ENCODE measurements at regions of chr7 and their contacts with region 1.

Region 1: DNA sequence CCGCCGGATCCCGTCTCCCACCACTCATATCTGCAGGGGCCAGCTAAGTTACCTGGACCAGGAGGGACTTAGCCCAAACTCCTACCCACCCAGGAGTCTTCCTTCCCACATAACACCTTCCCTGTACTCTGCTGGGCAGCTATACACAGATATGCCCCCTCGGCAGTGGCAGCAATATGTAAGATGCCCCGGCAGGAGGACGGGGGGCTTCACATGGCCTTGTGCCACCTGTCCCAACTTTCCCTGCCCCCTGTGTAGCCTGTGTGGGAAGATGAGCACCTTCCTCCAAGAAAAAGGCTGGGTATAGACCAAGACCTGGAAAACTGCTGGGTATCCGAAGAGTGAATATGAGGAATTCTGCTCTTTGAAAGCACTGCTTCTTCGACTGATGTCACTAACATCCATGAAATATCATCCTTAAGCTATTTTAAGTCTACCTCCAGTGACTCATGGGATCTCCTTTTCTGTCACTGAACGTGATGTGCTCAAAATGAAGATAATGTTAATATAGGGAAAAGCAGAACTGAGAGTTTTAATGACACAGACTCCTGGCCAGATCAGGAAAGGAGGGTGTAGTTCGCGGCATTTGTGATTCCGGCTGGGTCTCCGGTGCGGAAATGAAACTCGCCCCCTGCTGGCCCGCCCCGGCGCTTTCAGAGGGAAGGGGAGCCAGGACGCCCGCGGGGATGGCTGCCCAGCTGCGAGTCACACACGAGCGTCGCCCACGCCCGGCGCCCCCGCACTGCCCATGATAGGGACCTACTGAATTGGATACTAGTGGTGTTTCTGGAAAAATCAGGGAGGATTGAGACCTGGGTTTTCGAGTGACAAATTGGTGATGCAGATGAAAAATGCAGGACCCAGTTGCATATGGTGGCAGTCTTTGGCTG is 256.9 kb upstream of the NFE2L3 start:
- DNase-seq: peak; percentile 20
- ATAC-seq: peak; percentile 80
- H3K4me3 ChIP-seq: peak overlapping the region; percentile 6 to 44
- H3K27ac ChIP-seq: no peak overlapping the region
- H3K4me1 ChIP-seq: peaks cover 4% of the 10 kb centered on the region; the same call in 1 of the 2 replicates
- H3K27me3 ChIP-seq: peaks cover 5% of the 10 kb centered on the region; the same call in 1 of the 2 replicates
- CTCF ChIP-seq: peak; percentile 92

Region 2: DNA sequence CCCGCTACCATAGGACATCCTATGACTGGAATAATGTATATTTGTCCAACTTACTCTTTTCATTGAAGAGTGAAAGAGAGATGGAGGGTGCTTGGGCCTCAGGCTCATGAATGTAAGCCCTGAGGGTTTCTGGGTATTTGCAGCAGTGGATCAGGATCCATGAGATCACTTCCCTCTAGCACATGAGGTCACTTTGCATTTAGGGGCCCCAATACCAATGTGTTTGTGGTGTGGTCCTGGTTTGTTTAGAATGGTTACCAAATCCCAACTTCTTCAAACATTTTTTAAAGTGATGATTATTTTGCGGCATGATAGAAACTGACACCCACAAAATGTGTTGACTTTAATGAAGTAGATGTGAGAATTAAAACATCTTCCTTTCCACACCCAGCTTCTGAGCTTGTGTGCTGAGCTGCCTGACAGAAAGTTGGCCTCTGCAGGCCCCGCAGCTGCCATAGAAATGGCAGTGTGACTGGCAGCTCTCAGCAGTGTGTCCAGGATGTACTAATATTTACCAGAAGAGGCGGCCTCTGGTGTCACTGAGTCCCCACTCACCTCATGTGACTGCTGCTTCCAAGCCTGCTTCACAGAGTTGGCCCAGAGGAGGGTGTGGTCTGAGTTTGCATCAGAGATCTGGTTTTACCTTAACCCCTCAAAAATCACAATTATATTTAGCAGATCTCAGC is 219.2 kb before region 1 on chr7:
- CTCF ChIA-PET with region 1: no interaction called
- POLR2A ChIA-PET with region 1: no interaction called
- in situ Hi-C with region 1: no loop called
- intact Hi-C with region 1: no loop called
- DNase-seq: no peak
- ATAC-seq: no peak
- H3K4me3 ChIP-seq: no peak overlapping the region
- H3K27ac ChIP-seq: no peak overlapping the region
- H3K4me1 ChIP-seq: no peaks in the 10 kb centered on the region
- H3K27me3 ChIP-seq: 0 out of 2 replicates have a peak, but pooled peaks cover 3% of the 10 kb centered on the region
- CTCF ChIP-seq: no peak

Region 3: DNA sequence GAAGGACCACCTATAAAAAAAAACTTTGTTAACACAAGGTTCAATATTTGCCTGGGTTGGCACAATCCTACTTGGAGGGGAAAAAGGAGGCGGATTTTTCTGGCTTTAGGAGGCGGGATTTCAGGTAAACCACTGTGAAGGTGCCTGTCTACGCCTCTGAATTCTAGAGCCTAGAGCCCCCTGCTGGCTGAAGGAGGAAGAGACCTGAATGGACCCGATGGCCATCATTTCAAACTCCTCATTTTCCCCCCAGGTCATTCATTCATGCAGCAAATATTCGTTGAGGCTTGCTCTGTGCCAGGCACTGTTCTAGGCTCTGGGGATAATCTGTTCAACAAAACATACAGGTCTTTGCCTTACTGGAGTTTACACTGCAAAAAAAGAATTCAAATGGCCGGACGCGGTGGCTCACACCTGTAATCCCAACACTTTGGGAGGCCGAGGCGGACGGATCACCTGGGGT is 166.6 kb after region 1 on chr7:
- CTCF ChIA-PET with region 1: interaction called, 3 read pairs
- POLR2A ChIA-PET with region 1: no interaction called
- in situ Hi-C with region 1: no loop called
- intact Hi-C with region 1: loop called (anchors 1 kb)
- DNase-seq: peak; percentile 46
- ATAC-seq: peak; percentile 94
- H3K4me3 ChIP-seq: no peak overlapping the region
- H3K27ac ChIP-seq: no peak overlapping the region
- H3K4me1 ChIP-seq: peaks cover 3% of the 10 kb centered on the region; the same call in 1 of the 2 replicates
- H3K27me3 ChIP-seq: peaks cover 18% of the 10 kb centered on the region
- CTCF ChIP-seq: peak; percentile 97

Region 4: DNA sequence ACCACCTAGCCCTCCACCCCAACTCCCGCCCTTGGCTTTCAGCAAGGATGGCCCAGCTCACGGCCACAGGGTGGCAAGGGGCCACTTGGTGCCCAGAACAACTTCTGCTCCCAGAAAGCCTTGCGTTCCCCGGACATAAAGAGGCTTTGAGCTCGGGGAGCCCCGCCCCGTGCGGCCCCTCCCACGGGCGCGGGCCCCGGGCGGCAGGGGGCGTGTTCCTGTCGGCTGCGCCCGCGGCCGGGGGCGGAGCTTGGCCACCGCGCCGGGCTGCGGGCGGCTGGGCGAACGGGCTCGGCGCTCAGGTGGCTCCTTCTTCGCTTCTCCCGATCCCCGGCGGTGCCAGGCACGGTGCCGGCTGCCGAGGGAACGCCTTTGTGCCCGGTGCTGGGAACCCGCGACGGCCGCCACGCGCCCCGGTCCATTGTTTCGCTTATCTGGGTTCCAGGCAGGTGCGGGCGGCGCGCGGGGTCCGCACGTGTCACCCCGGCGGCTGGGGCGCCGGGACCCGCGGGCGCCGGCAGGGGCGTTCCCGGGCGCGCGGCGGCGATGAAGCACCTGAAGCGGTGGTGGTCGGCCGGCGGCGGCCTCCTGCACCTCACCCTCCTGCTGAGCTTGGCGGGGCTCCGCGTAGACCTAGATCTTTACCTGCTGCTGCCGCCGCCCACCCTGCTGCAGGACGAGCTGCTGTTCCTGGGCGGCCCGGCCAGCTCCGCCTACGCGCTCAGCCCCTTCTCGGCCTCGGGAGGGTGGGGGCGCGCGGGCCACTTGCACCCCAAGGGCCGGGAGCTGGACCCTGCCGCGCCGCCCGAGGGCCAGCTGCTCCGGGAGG is 257.0 kb after region 1 on chr7 and contains the start of gene NFE2L3:
- CTCF ChIA-PET with region 1: no interaction called
- POLR2A ChIA-PET with region 1: no interaction called
- in situ Hi-C with region 1: no loop called
- intact Hi-C with region 1: loop called (anchors 10 kb)
- DNase-seq: no peak
- ATAC-seq: peak; percentile 75
- H3K4me3 ChIP-seq: peak within 1 kb of the TSS; percentile 53 to 88
- H3K27ac ChIP-seq: peak within 1 kb of the TSS; percentile 95
- H3K4me1 ChIP-seq: peaks cover 19% of the 10 kb centered on the region
- H3K27me3 ChIP-seq: no peaks in the 10 kb centered on the region
- CTCF ChIP-seq: peak; percentile 39; the same call in 1 of the 2 replicates
- total RNA-seq, gene NFE2L3: 78.5 TPM

Region 5: GRCh38 chr7:26187380-26188205 is 292.4 kb after region 1 on chr7:
- CTCF ChIA-PET with region 1: interaction called, 4 read pairs
- POLR2A ChIA-PET with region 1: interaction called, 3 read pairs
- in situ Hi-C with region 1: no loop called
- intact Hi-C with region 1: loop called (anchors 5 kb)
- DNase-seq: no peak
- ATAC-seq: peak; percentile 28
- H3K4me3 ChIP-seq: no peak overlapping the region
- H3K27ac ChIP-seq: peak overlapping the region; percentile 87
- H3K4me1 ChIP-seq: peaks cover 92% of the 10 kb centered on the region
- H3K27me3 ChIP-seq: no peaks in the 10 kb centered on the region
- CTCF ChIP-seq: no peak

Region 6: GRCh38 chr7:26667500-26668133 is 772.5 kb after region 1 on chr7:
- CTCF ChIA-PET with region 1: interaction called, 10 read pairs
- POLR2A ChIA-PET with region 1: no interaction called
- in situ Hi-C with region 1: no loop called
- intact Hi-C with region 1: loop called (anchors 5 kb)
- DNase-seq: peak; percentile 80
- ATAC-seq: peak; percentile 98
- H3K4me3 ChIP-seq: no peak overlapping the region
- H3K27ac ChIP-seq: no peak overlapping the region
- H3K4me1 ChIP-seq: peaks cover 4% of the 10 kb centered on the region
- H3K27me3 ChIP-seq: no peaks in the 10 kb centered on the region
- CTCF ChIP-seq: peak; percentile 97

Measured in Panc1 (cell line).